IMR-90 (cell line): ENCODE measurements at regions of chr10 and their contacts with region 1.

Region 1: GRCh38 chr10:59240582-59241183 is 64.2 kb downstream of the PHYHIPL start:
- DNase-seq: peak; percentile 55
- ATAC-seq: no peak
- H3K4me3 ChIP-seq: no peak overlapping the region
- H3K27ac ChIP-seq: no peak overlapping the region
- H3K4me1 ChIP-seq: no peaks in the 10 kb centered on the region
- H3K27me3 ChIP-seq: no peaks in the 10 kb centered on the region
- CTCF ChIP-seq: peak; percentile 75
- POLR2A ChIP-seq: no peak
- RAD21 ChIP-seq: peak; percentile 75

Region 2: DNA sequence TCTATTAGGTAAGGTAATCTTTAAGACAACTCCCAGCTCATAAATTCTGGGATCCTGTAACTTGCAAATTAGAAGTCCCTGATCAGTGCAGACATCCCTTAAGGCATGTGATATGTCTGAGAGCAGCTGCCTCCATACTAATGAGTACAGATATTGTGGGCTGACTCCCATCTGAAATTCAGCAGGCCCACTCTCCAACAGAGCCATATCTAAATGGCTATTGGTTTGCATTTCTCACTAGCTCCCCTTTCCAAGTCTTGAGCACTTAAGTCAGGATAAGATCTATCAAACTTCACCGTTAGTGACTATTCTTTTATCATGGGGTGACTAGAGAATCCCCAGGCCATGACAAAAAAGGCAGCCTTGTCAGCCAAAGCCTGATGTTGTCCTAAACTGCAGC is 1758.4 kb before region 1 on chr10:
- CTCF ChIA-PET with region 1: no interaction called
- POLR2A ChIA-PET with region 1: no interaction called
- dilution Hi-C with region 1: no loop called
- in situ Hi-C with region 1: no loop called
- intact Hi-C with region 1: no loop called
- DNase-seq: no peak
- ATAC-seq: no peak
- H3K4me3 ChIP-seq: no peak overlapping the region
- H3K27ac ChIP-seq: no peak overlapping the region
- H3K4me1 ChIP-seq: no peaks in the 10 kb centered on the region
- H3K27me3 ChIP-seq: no peaks in the 10 kb centered on the region
- CTCF ChIP-seq: no peak
- POLR2A ChIP-seq: no peak
- RAD21 ChIP-seq: no peak

Region 3: GRCh38 chr10:58807629-58808022 is 433.1 kb before region 1 on chr10:
- CTCF ChIA-PET with region 1: no interaction called
- POLR2A ChIA-PET with region 1: no interaction called
- dilution Hi-C with region 1: no loop called
- in situ Hi-C with region 1: no loop called
- intact Hi-C with region 1: no loop called
- DNase-seq: peak; percentile 63
- ATAC-seq: peak; percentile 86
- H3K4me3 ChIP-seq: no peak overlapping the region
- H3K27ac ChIP-seq: no peak overlapping the region
- H3K4me1 ChIP-seq: peaks cover 3% of the 10 kb centered on the region; the same call in 1 of the 2 replicates
- H3K27me3 ChIP-seq: no peaks in the 10 kb centered on the region
- CTCF ChIP-seq: no peak
- POLR2A ChIP-seq: no peak
- RAD21 ChIP-seq: no peak

Region 4: DNA sequence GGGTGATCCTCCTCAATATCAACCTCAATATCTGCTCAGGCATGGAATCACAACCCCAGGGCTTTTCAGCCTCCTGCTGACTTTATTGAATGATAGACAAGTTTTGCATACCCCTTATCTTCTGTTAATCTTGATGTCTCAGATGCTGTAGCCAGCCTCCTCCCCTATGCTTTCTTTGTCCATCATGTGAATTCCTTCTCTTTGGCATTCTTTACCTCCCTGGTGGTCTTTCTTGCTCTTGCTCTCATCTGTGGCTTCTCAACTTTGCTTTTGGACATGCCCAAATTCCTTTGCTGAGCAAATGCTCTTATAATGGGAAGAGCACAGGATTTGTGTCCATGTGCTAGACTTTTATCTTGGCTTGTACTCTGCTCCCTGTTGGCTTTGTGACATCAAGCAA is 195.0 kb after region 1 on chr10:
- CTCF ChIA-PET with region 1: no interaction called
- POLR2A ChIA-PET with region 1: no interaction called
- dilution Hi-C with region 1: no loop called
- in situ Hi-C with region 1: no loop called
- intact Hi-C with region 1: no loop called
- DNase-seq: no peak
- ATAC-seq: no peak
- H3K4me3 ChIP-seq: no peak overlapping the region
- H3K27ac ChIP-seq: no peak overlapping the region
- H3K4me1 ChIP-seq: no peaks in the 10 kb centered on the region
- H3K27me3 ChIP-seq: no peaks in the 10 kb centered on the region; the same call in 1 of the 2 replicates
- CTCF ChIP-seq: no peak
- POLR2A ChIP-seq: no peak
- RAD21 ChIP-seq: no peak

Region 5: DNA sequence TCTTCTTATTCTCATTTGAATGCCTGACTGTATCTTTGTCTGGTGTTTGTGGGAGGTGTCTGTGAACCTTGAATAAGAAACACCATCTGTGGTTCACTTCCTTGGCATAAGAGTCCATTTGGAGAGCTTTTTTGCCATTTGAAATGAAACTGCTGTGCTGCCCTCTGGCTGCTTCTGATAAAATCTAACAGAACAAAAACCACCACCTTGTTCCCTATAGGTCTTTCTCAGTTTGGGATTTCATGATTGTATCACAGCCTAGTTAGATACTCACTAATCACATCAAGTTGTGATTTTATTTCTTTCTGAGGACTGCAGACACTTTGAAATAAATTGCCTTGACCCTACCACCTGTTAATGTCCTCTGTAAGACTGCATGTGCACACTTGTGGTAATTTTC is 224.4 kb after region 1 on chr10:
- CTCF ChIA-PET with region 1: no interaction called
- POLR2A ChIA-PET with region 1: no interaction called
- dilution Hi-C with region 1: no loop called
- in situ Hi-C with region 1: loop called (anchors 10 kb)
- intact Hi-C with region 1: loop called (anchors 1 kb)
- DNase-seq: peak; percentile 53
- ATAC-seq: peak; percentile 44; the same call in 1 of the 2 replicates
- H3K4me3 ChIP-seq: no peak overlapping the region
- H3K27ac ChIP-seq: no peak overlapping the region
- H3K4me1 ChIP-seq: no peaks in the 10 kb centered on the region
- H3K27me3 ChIP-seq: no peaks in the 10 kb centered on the region; the same call in 1 of the 2 replicates
- CTCF ChIP-seq: peak; percentile 40
- POLR2A ChIP-seq: no peak
- RAD21 ChIP-seq: peak; percentile 47

Region 6: DNA sequence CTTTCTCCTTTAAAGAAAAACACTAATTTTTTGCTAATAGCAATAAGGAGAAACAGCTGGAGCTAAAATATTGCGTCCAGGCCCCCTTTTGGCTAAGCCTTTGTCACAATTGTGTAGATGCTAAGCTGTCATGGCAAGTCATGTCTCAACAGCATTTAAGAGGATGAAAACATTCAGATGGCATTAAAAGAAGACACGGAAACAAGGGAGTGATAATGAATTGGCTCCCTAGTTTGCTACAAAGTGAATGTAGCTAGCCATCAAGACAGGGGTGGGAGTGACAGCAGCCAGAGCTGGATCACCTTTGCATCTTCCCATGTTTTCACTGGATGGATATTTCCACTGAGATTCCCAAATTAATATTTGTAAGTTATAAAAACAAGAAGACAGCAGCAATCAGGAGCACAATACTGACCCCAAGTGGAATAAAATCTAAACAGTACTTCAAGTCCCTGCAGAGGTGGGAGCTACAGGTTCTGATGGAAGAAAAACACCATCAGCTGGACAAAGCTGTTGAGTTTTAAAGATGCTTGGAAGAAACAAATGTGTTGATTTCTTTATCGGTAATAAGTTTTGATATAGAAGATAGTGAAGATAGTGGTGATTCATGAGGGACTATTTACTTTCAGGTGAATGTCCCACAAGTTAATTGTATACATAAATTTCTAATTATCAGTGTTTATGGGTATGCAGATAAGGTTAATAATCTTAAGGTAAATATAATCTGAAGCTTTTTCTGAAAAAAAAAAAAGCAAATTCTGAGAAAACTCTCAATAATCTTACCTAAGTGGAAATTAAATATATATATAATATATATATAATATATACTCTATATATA is 339.6 kb after region 1 on chr10:
- CTCF ChIA-PET with region 1: interaction called, 3 read pairs
- POLR2A ChIA-PET with region 1: no interaction called
- dilution Hi-C with region 1: no loop called
- in situ Hi-C with region 1: loop called (anchors 5 kb)
- intact Hi-C with region 1: loop called (anchors 1 kb)
- DNase-seq: peak; percentile 58
- ATAC-seq: peak; percentile 51; the same call in 1 of the 2 replicates
- H3K4me3 ChIP-seq: no peak overlapping the region
- H3K27ac ChIP-seq: no peak overlapping the region
- H3K4me1 ChIP-seq: peaks cover 3% of the 10 kb centered on the region; the same call in 1 of the 2 replicates
- H3K27me3 ChIP-seq: peaks cover 2% of the 10 kb centered on the region; the same call in 1 of the 2 replicates
- CTCF ChIP-seq: peak; percentile 60
- POLR2A ChIP-seq: no peak
- RAD21 ChIP-seq: peak; percentile 65

Region 7: DNA sequence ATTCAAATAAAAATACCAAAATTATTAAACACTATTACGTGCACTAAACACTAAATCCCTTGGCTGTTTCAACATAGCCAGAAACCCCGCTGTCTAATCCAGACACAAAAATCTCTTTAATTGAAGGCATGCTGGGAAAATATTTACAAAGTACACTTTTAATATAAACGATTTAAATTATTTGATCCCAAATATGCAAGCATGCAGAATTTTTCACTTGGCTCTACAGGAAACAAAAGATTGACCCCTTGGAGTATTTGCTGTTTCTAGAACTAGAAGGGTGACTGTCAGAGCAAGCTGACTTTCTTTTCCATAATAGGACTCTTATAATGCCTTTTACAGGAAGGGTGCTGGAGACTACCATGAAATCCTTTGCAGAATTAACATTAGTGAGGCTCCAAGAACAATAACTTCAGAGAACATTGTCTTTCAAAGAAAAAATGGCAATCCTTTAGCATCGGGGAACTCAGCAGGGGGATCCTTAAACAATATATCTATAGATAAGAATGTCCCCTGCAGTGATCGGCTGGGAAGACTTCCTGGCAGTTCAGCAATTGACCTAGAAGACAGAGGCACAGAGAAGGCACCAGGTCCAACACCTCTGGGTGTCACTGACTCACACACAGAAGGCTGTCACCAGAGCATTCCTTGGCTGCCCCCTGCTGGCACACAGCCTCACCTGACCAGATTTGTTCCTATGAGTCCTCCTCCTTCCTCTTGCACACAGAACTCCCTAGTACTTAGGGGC is 568.4 kb after region 1 on chr10:
- CTCF ChIA-PET with region 1: no interaction called
- POLR2A ChIA-PET with region 1: no interaction called
- dilution Hi-C with region 1: no loop called
- in situ Hi-C with region 1: no loop called
- intact Hi-C with region 1: loop called (anchors 10 kb)
- DNase-seq: peak; percentile 37
- ATAC-seq: peak; percentile 72
- H3K4me3 ChIP-seq: no peak overlapping the region
- H3K27ac ChIP-seq: no peak overlapping the region
- H3K4me1 ChIP-seq: no peaks in the 10 kb centered on the region
- H3K27me3 ChIP-seq: no peaks in the 10 kb centered on the region
- CTCF ChIP-seq: peak; percentile 52
- POLR2A ChIP-seq: no peak
- RAD21 ChIP-seq: peak; percentile 47

Region 8: DNA sequence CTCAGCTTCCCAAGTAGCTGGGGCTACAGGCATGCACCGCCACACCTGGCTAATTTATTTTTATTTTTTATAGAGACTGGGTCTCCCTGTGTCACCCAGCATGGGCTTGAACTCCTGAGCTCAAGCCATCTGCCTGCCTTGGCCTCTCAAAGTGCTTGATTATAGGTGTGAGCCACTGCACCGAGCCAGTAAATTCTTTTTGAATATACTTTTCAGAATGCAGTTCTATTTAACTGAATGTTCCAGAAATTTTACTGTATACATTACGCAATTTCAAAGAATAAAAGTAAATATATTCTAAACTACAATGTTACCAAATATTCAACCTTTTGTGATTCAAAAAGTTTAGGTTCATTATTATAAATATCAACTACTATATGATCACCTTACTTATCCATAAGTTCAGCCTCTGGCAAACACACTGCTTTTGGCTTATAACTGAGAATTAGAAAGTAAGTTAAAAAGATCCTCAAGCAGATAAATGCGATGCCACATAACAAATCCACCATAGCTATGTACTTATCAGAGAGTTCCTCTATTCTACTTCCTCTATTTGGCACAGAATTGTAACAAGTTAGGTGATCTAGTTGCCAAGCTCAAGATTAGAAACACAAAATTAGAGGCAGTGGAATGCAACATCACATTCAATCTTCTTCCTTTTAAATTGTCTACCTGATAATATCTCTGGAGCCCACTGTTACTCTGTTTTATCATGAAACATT is 1030.8 kb after region 1 on chr10:
- CTCF ChIA-PET with region 1: no interaction called
- POLR2A ChIA-PET with region 1: no interaction called
- dilution Hi-C with region 1: no loop called
- in situ Hi-C with region 1: no loop called
- intact Hi-C with region 1: no loop called
- DNase-seq: no peak
- ATAC-seq: no peak
- H3K4me3 ChIP-seq: no peak overlapping the region
- H3K27ac ChIP-seq: no peak overlapping the region
- H3K4me1 ChIP-seq: no peaks in the 10 kb centered on the region
- H3K27me3 ChIP-seq: no peaks in the 10 kb centered on the region; the same call in 1 of the 2 replicates
- CTCF ChIP-seq: no peak
- POLR2A ChIP-seq: no peak
- RAD21 ChIP-seq: no peak